ENCODE measurements at regions of chr2 and their contacts with region 1.

Region 1: GRCh38 chr2:237572021-237572741 is 5.8 kb downstream of the PRLH start:
- DNase-seq: peak; percentile 87
- ATAC-seq: peak; percentile 81
- H3K4me3 ChIP-seq: peak overlapping the region; percentile 32; the same call in 1 of the 2 replicates
- H3K27ac ChIP-seq: no peak overlapping the region
- H3K4me1 ChIP-seq: peaks cover 25% of the 10 kb centered on the region
- H3K27me3 ChIP-seq: no peaks in the 10 kb centered on the region
- CTCF ChIP-seq: peak; percentile 98

Region 2: GRCh38 chr2:237201461-237202287 is 370.5 kb before region 1 on chr2:
- CTCF ChIA-PET with region 1: no interaction called
- POLR2A ChIA-PET with region 1: no interaction called
- intact Hi-C with region 1: no loop called
- DNase-seq: peak; percentile 96
- ATAC-seq: peak; percentile 89
- H3K4me3 ChIP-seq: peak overlapping the region; percentile 40; the same call in 1 of the 2 replicates
- H3K27ac ChIP-seq: peak overlapping the region; percentile 71
- H3K4me1 ChIP-seq: peaks cover 55% of the 10 kb centered on the region
- H3K27me3 ChIP-seq: no peaks in the 10 kb centered on the region
- CTCF ChIP-seq: no peak

Region 3: GRCh38 chr2:237421542-237422116 is 150.6 kb before region 1 on chr2:
- CTCF ChIA-PET with region 1: interaction called, 16 read pairs
- POLR2A ChIA-PET with region 1: no interaction called
- intact Hi-C with region 1: loop called (anchors 1 kb)
- DNase-seq: peak; percentile 88
- ATAC-seq: peak; percentile 93
- H3K4me3 ChIP-seq: no peak overlapping the region
- H3K27ac ChIP-seq: peak overlapping the region; percentile 51
- H3K4me1 ChIP-seq: peaks cover 10% of the 10 kb centered on the region
- H3K27me3 ChIP-seq: no peaks in the 10 kb centered on the region
- CTCF ChIP-seq: peak; percentile 90

Region 4: DNA sequence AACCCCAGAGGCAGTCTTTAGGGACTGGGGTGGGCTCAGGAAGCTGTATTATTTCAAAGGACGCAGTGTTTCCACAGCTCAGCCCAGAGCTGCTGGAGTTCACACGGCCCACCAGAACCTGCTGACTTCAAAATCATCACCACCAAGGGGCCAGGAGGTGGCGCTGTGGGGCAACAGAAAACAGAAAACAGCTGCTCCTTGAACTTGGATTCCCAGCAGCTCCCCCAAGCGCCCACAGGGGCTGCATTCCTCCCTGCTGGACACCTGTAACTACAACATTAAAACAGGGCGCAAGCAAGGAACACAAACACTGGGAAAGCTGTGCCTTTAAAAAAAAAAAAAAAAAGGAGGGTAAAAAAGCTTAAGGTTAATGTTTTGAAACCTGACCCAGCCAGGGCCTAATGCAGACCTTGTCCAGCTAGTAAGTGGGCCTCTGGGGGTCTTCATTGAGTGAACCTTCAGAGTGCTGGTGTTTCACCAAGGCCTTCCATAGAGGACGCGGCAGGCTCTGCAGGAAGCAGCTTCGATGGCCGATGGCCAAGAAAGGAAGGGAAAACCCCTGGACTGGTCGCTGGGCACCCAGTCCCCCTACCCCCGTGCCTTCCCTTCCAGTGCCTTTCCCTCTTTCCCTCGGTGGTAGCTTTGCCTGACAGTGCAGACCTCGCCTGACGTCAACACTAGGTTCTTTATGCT is 59.3 kb before region 1 on chr2:
- CTCF ChIA-PET with region 1: interaction called, 12 read pairs
- POLR2A ChIA-PET with region 1: no interaction called
- intact Hi-C with region 1: loop called (anchors 5 kb)
- DNase-seq: peak; percentile 78
- ATAC-seq: peak; percentile 61
- H3K4me3 ChIP-seq: no peak overlapping the region
- H3K27ac ChIP-seq: peak overlapping the region; percentile 49
- H3K4me1 ChIP-seq: no peaks in the 10 kb centered on the region
- H3K27me3 ChIP-seq: no peaks in the 10 kb centered on the region
- CTCF ChIP-seq: peak; percentile 94

Region 5: DNA sequence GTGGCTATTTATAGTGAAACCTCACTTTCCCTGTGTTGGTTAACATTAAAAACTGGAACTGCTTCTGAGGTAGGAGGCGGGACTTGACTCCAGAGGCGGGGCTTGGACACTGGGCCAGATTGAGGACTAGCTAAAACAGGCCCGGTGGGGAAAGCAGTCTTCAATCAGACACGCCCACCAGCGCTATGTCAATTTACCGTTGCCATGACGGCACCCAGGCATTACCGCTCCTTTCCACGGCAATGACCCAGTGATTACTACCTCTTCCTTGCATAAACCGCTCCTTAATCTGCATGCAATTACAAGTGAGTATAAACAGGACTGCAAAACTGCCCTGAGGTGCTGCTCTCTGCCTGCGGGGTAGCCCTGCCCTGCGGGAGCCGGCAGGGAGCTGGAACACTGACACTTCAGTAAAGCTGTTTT is 90.5 kb after region 1 on chr2:
- CTCF ChIA-PET with region 1: no interaction called
- POLR2A ChIA-PET with region 1: interaction called, 13 read pairs
- intact Hi-C with region 1: no loop called
- DNase-seq: peak; percentile 74
- ATAC-seq: peak; percentile 90
- H3K4me3 ChIP-seq: no peak overlapping the region
- H3K27ac ChIP-seq: no peak overlapping the region
- H3K4me1 ChIP-seq: peaks cover 8% of the 10 kb centered on the region
- H3K27me3 ChIP-seq: no peaks in the 10 kb centered on the region
- CTCF ChIP-seq: no peak

Region 6: DNA sequence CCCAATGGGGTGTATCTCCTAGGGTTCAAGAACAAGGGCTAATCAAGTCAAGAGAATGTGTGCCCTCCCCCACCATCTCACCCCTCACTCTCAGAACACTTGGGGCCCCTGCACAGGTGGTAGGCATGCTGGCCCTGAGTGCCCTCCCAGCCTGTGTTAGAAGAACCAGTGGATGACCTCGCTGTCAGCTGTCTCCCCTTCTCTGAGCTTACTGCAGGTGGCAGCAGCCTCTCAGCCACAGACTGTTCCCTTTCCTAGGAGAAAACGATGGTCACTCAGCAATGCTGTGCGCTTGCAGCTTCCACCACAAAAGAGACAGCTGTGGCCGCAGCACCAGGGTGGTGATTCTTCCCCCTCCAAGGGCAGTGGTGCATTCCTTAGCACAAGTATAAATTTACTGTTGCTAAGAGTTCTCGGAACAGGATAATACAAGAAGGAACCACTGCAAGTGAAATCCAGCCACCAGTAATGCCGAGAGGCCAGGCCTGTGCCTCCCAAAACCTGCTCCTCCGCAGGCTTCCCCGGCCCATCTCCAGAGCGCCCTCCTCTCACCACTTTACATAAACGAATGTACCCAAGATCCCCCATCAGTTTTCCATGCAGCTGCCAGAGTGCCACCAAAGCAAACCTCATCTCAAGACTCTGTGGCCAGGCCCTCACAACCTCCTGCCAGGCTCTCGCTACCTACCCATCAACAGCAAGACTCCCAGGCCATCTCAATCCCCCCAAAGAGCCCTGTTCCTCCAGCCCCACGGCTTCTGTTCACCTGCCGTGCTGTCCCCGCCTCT is 286.3 kb after region 1 on chr2:
- CTCF ChIA-PET with region 1: no interaction called
- POLR2A ChIA-PET with region 1: no interaction called
- intact Hi-C with region 1: no loop called
- DNase-seq: peak; percentile 84
- ATAC-seq: peak; percentile 53
- H3K4me3 ChIP-seq: peak overlapping the region; percentile 76
- H3K27ac ChIP-seq: peak overlapping the region; percentile 47
- H3K4me1 ChIP-seq: peaks cover 54% of the 10 kb centered on the region
- H3K27me3 ChIP-seq: no peaks in the 10 kb centered on the region
- CTCF ChIP-seq: peak; percentile 88

Region 7: GRCh38 chr2:238370823-238371372 is 798.7 kb after region 1 on chr2:
- CTCF ChIA-PET with region 1: no interaction called
- POLR2A ChIA-PET with region 1: no interaction called
- intact Hi-C with region 1: no loop called
- DNase-seq: peak; percentile 71
- ATAC-seq: peak; percentile 99
- H3K4me3 ChIP-seq: no peak overlapping the region
- H3K27ac ChIP-seq: no peak overlapping the region
- H3K4me1 ChIP-seq: no peaks in the 10 kb centered on the region
- H3K27me3 ChIP-seq: no peaks in the 10 kb centered on the region
- CTCF ChIP-seq: peak; percentile 93